ENCODE measurements at regions of chr17 and their contacts with region 1.

Region 1: GRCh38 chr17:62859146-62859545 is 51.0 kb upstream of the MARCHF10 start:
- DNase-seq: no peak
- ATAC-seq: no peak
- H3K4me3 ChIP-seq: no peak overlapping the region
- H3K4me3 Mint-ChIP-seq: no peak overlapping the region
- H3K27ac ChIP-seq: no peak overlapping the region
- H3K27ac Mint-ChIP-seq: no peak overlapping the region
- H3K4me1 ChIP-seq: no peaks in the 10 kb centered on the region
- H3K4me1 Mint-ChIP-seq: no peaks in the 10 kb centered on the region
- H3K27me3 ChIP-seq: peaks cover 0 to 2% of the 10 kb centered on the region in 2 experiments
- H3K27me3 Mint-ChIP-seq: peaks cover 15% of the 10 kb centered on the region
- CTCF ChIP-seq: no peak

Region 2: DNA sequence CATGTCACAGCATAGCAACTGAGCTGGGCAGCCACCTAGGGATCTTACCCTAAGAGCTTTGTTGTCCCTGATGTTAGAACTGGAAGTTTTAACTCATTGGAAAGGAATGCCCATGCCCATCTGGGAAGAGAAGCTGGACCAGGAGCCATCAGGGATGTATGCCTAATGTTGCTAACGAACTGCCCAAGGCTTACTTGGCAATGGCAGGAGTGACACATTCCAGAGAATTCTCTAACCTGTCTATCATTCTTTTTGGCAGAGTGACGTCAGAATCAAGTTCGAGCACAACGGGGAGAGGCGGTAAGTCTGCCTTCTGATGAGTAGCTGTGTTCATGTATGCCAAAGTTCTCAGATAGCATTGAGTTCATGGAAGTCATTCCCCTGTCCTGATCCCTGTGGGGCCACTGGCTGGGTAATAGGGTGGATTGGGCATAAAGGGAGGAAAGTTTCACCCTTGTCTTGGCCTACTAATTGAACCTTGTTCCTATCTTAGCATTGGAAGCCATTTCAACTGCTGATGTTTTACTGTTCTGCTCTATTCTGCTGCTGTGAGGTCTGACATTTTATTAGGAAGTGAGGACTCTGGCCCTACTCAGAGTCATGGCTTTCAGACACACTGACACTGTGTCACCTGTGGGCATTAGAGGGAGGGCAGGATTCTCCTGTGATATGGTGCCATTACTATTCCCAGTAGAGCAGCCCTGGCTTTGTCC is 786.8 kb after region 1 on chr17:
- CTCF ChIA-PET with region 1: no interaction called
- POLR2A ChIA-PET with region 1: no interaction called
- intact Hi-C with region 1: loop called in 1 of 2 experiments (anchors 5 kb)
- DNase-seq: no peak
- ATAC-seq: no peak
- H3K4me3 ChIP-seq: no peak overlapping the region
- H3K4me3 Mint-ChIP-seq: no peak overlapping the region
- H3K27ac ChIP-seq: no peak overlapping the region
- H3K27ac Mint-ChIP-seq: no peak overlapping the region
- H3K4me1 ChIP-seq: peaks cover 4% of the 10 kb centered on the region
- H3K4me1 Mint-ChIP-seq: peaks cover 20% of the 10 kb centered on the region
- H3K27me3 ChIP-seq: no peaks in the 10 kb centered on the region
- H3K27me3 Mint-ChIP-seq: no peaks in the 10 kb centered on the region
- CTCF ChIP-seq: no peak